K562 (cell line): ENCODE measurements at regions of chr3 and their contacts with region 1.

Region 1: GRCh38 chr3:141738022-141738890 is at the start of gene RNF7:
- DNase-seq: peak; percentile 95 to 99 (median 98)
- ATAC-seq: peak; percentile 94
- H3K4me3 ChIP-seq: peak within 1 kb of the TSS; percentile 92
- H3K27ac ChIP-seq: peak within 1 kb of the TSS; percentile 88
- H3K4me1 ChIP-seq: peaks cover 10 to 39% of the 10 kb centered on the region in 2 experiments
- H3K27me3 ChIP-seq: no peaks in the 10 kb centered on the region
- CTCF ChIP-seq: peak; percentile 91 to 97 (median 95)
- EP300 ChIP-seq: no peak
- POLR2A ChIP-seq: peak; percentile 90
- RAD21 ChIP-seq: peak; percentile 86 to 95
- polyA plus RNA-seq, gene RNF7: 112 to 133 TPM

Region 2: DNA sequence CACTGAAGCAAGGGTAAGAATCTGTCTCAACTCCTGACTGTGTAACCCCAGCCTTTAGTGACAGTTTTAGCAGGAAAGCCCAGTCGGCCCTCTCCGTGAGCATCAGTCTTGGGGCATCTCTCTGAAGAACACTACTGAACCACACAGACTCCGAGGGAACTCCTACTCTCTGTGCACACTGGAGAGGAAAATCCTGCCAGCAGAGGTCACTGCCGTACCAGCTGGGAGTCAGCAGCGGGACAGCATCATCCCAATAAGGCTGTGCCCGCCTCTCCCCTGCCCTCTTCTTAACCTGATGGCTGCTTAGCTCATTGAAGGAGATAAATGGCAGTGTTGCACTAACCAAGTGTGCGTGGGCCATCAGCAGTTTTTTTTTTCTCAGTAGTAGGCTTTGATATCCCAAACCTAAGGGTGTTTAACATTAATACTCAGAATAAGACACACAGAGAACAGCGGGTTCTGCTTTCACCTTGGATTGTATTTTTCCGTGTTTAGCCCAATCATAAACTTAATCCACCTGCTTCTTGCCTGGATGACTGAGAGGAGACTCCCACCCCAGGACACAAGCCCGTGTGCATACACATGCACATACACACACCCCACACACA is 278.1 kb before region 1 on chr3:
- CTCF ChIA-PET with region 1: interaction called, 3 read pairs
- POLR2A ChIA-PET with region 1: interaction called, 3 read pairs
- in situ Hi-C with region 1: no loop called
- intact Hi-C with region 1: loop called (anchors 2 kb)
- DNase-seq: peak; percentile 70 to 91 (median 77)
- ATAC-seq: peak; percentile 97
- H3K4me3 ChIP-seq: no peak overlapping the region
- H3K27ac ChIP-seq: no peak overlapping the region
- H3K4me1 ChIP-seq: peaks cover 12 to 30% of the 10 kb centered on the region in 2 experiments; a peak in 4 of 5 replicates
- H3K27me3 ChIP-seq: no peaks in the 10 kb centered on the region
- CTCF ChIP-seq: peak; percentile 91 to 96 (median 93)
- EP300 ChIP-seq: no peak
- POLR2A ChIP-seq: no peak
- RAD21 ChIP-seq: peak; percentile 96 to 97

Region 3: GRCh38 chr3:141644931-141645330 is 93.3 kb before region 1 on chr3:
- CTCF ChIA-PET with region 1: no interaction called
- POLR2A ChIA-PET with region 1: no interaction called
- in situ Hi-C with region 1: no loop called
- intact Hi-C with region 1: loop called (anchors 2 kb)
- DNase-seq: peak; percentile 72 to 82 (median 73)
- ATAC-seq: peak; percentile 91
- H3K4me3 ChIP-seq: no peak overlapping the region
- H3K27ac ChIP-seq: no peak overlapping the region
- H3K4me1 ChIP-seq: peaks cover 0 to 11% of the 10 kb centered on the region in 2 experiments; a peak in 3 of 5 replicates
- H3K27me3 ChIP-seq: no peaks in the 10 kb centered on the region
- CTCF ChIP-seq: peak; percentile 73 to 94 (median 82)
- EP300 ChIP-seq: no peak
- POLR2A ChIP-seq: no peak
- RAD21 ChIP-seq: peak; percentile 57 to 82

Region 4: GRCh38 chr3:141796081-141796888 is 58.0 kb after region 1 on chr3:
- CTCF ChIA-PET with region 1: no interaction called
- POLR2A ChIA-PET with region 1: no interaction called
- in situ Hi-C with region 1: no loop called
- intact Hi-C with region 1: no loop called
- DNase-seq: no peak
- ATAC-seq: peak; percentile 38
- H3K4me3 ChIP-seq: no peak overlapping the region
- H3K27ac ChIP-seq: no peak overlapping the region
- H3K4me1 ChIP-seq: peaks cover 8 to 20% of the 10 kb centered on the region in 2 experiments; a peak in 4 of 5 replicates
- H3K27me3 ChIP-seq: no peaks in the 10 kb centered on the region
- CTCF ChIP-seq: no peak
- EP300 ChIP-seq: no peak
- POLR2A ChIP-seq: no peak
- RAD21 ChIP-seq: no peak

Region 5: DNA sequence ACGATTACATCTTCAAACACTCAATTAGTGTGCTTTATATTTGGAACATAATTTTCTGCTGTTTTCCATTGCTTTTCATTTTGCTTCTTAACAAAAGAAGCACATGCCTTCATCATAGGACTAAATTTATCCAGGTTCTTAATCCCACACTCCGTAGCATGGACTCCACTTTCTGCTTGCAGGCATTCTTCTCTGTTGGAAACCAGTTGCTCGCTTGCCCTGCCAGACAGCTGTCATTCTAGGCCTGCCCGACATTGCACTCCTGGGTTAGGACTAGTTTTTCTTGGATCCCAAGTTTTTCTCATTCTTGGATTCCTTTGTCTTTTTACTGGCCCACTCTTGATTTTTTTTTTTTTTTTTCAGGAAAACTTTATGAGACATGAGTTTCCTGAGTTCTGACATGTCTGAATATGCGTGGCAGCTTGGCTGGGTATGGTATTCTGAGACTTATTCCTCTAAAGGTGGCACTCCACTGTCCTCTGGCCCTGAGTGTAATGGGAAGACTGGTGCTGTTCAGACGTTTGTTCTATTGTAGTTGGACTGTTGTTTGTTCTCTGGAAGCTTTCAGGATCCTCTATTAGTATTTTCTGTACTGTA is 131.9 kb after region 1 on chr3:
- CTCF ChIA-PET with region 1: interaction called, 16 read pairs
- POLR2A ChIA-PET with region 1: interaction called, 11 read pairs
- in situ Hi-C with region 1: loop called (anchors 5 kb)
- intact Hi-C with region 1: loop called (anchors 1 kb)
- DNase-seq: no peak
- ATAC-seq: no peak
- H3K4me3 ChIP-seq: no peak overlapping the region
- H3K27ac ChIP-seq: no peak overlapping the region
- H3K4me1 ChIP-seq: peaks cover 3 to 4% of the 10 kb centered on the region in 2 experiments; a peak in 3 of 5 replicates
- H3K27me3 ChIP-seq: no peaks in the 10 kb centered on the region
- CTCF ChIP-seq: no peak
- EP300 ChIP-seq: no peak
- POLR2A ChIP-seq: no peak
- RAD21 ChIP-seq: no peak

Region 6: DNA sequence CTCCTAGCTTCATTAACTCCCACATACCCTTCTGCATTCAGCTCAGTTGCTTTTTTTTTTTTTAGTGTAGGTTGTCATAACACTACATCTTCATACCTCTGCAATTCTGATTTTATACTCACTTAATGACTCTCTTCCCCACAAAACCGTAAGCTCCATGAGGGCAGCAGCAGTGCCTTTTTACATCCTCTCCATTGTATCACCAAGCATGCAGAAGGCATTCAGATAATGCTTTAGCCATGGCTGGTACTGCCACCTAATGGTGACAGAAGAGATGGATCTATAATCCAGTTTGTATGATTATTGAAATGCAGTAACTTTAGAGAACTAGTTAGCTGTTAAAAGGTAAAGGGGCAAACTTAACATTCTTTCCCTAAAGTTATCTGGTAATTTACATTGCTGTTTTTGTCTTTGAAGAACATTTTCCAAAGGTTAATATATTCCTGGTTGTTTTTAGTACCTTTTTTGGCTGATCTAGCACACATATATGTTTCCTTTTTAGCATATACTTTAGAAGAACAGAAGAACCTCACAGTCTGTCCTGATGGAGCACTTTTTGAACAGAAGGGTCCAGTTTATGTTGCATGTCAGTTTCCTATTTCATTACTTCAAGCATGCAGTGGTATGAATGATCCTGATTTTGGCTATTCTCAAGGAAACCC is 175.0 kb after region 1 on chr3:
- CTCF ChIA-PET with region 1: no interaction called
- POLR2A ChIA-PET with region 1: interaction called, 5 read pairs
- in situ Hi-C with region 1: no loop called
- intact Hi-C with region 1: loop called (anchors 1 kb)
- DNase-seq: peak; percentile 50 to 72 (median 54)
- ATAC-seq: peak; percentile 82
- H3K4me3 ChIP-seq: no peak overlapping the region
- H3K27ac ChIP-seq: no peak overlapping the region
- H3K4me1 ChIP-seq: no peaks in the 10 kb centered on the region
- H3K27me3 ChIP-seq: no peaks in the 10 kb centered on the region
- CTCF ChIP-seq: peak; percentile 49 to 67 (median 62)
- EP300 ChIP-seq: no peak
- POLR2A ChIP-seq: no peak
- RAD21 ChIP-seq: peak; percentile 51 to 81

Region 7: GRCh38 chr3:142560118-142560517 is 821.9 kb after region 1 on chr3:
- CTCF ChIA-PET with region 1: no interaction called
- POLR2A ChIA-PET with region 1: no interaction called
- in situ Hi-C with region 1: no loop called
- intact Hi-C with region 1: no loop called
- DNase-seq: no peak
- ATAC-seq: no peak
- H3K4me3 ChIP-seq: no peak overlapping the region
- H3K27ac ChIP-seq: no peak overlapping the region
- H3K4me1 ChIP-seq: no peaks in the 10 kb centered on the region
- H3K27me3 ChIP-seq: no peaks in the 10 kb centered on the region
- CTCF ChIP-seq: no peak
- EP300 ChIP-seq: no peak
- POLR2A ChIP-seq: no peak
- RAD21 ChIP-seq: no peak